ENCODE measurements at regions of chr4 and their contacts with region 1.

Region 1: DNA sequence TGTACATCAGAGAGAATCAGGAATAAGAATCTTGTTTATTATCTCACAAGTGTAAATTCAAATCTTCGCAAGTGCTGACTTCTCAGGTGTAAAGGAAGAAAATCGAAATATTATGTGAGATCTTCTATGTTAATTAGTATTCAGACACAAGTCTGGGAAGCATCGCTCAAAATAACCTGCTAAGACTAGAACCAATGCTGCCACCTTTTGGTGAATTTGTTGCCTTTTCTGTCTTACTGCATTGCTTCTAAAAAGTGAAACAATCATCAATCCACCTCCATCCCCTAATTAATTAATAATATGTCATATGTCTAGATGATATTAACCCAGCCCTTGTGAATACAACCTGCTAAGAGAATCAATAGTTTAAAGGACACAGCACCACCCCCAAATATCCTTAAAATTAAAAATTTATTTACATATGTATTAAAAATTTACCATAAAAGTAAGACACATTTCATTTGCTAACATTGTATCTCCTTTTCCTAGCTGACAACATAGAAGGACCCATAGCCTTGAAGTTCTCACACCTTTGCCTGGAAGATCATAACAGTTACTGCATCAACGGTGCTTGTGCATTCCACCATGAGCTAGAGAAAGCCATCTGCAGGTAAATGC is 3.5 kb downstream of the EPGN start:
- DNase-seq: peak in 4 of 14 experiments; percentile 36 to 69 (median 58)
- ATAC-seq: no peak
- H3K4me3 ChIP-seq: no peak overlapping the region
- H3K4me3 Mint-ChIP-seq: no peak overlapping the region
- H3K27ac ChIP-seq: no peak overlapping the region
- H3K27ac Mint-ChIP-seq: no peak overlapping the region
- H3K4me1 ChIP-seq: no peaks in the 10 kb centered on the region
- H3K4me1 Mint-ChIP-seq: peaks cover 23% of the 10 kb centered on the region
- H3K27me3 ChIP-seq: no peaks in the 10 kb centered on the region
- H3K27me3 Mint-ChIP-seq: no peaks in the 10 kb centered on the region
- CTCF ChIP-seq: peak; percentile 51

Region 2: GRCh38 chr4:74189331-74190043 is 122.3 kb before region 1 on chr4:
- CTCF ChIA-PET with region 1: no interaction called
- POLR2A ChIA-PET with region 1: no interaction called
- intact Hi-C with region 1: loop called in 1 of 2 experiments (anchors 1 kb)
- DNase-seq: peak in 4 of 14 experiments; percentile 6 to 69 (median 56)
- ATAC-seq: peak; percentile 34
- H3K4me3 ChIP-seq: no peak overlapping the region
- H3K4me3 Mint-ChIP-seq: no peak overlapping the region
- H3K27ac ChIP-seq: no peak overlapping the region
- H3K27ac Mint-ChIP-seq: no peak overlapping the region
- H3K4me1 ChIP-seq: no peaks in the 10 kb centered on the region
- H3K4me1 Mint-ChIP-seq: no peaks in the 10 kb centered on the region
- H3K27me3 ChIP-seq: no peaks in the 10 kb centered on the region
- H3K27me3 Mint-ChIP-seq: no peaks in the 10 kb centered on the region
- CTCF ChIP-seq: peak; percentile 70

Region 3: DNA sequence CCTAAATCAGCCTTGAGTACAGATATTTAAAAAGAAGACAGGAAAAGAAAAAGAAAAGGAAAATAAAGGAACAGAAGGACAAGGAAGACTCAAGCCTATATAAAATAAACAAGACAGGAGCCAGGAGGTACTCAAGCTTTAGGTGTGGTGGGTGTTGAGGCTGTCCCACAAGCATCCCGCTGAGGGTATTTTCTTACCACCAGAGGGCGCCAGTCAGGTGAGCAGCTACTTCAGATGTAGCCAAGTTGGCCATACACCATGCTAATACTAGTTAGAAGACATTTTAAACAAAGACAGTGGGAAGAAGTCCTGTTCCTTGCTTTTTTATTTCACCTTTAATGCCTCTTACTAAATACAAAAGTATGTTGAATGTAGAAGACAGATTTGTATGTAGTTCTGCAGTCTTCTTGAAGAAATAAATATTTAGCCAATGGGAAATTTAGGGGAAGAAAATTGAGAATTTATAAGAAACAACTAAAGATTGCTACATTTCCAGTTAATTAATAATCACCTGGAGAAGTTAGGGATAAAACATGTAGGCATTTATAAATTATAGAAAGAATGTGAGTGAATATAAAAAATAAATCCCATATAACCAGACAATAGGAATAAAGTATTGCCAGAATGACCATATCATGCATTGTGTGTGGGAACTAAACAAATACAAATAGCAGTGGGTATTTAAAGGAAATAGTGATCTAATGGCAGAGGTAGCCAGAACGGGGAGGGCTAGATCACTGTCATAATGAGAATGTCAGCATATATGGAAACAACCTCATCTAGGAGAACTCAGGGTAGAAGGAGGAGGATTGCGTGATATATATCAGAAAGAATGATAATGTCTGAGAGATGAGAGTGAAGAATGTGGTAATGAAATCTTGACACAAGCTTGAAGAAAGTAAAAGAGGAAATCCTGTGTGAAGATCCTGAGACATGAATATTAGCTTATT is 82.8 kb before region 1 on chr4:
- CTCF ChIA-PET with region 1: interaction called, 3 read pairs
- POLR2A ChIA-PET with region 1: interaction called, 3 read pairs
- intact Hi-C with region 1: loop called (anchors 1 to 2 kb)
- DNase-seq: peak; percentile 51 to 84 (median 66)
- ATAC-seq: peak; percentile 75
- H3K4me3 ChIP-seq: no peak overlapping the region
- H3K4me3 Mint-ChIP-seq: no peak overlapping the region
- H3K27ac ChIP-seq: no peak overlapping the region
- H3K27ac Mint-ChIP-seq: no peak overlapping the region
- H3K4me1 ChIP-seq: no peaks in the 10 kb centered on the region
- H3K4me1 Mint-ChIP-seq: no peaks in the 10 kb centered on the region
- H3K27me3 ChIP-seq: no peaks in the 10 kb centered on the region
- H3K27me3 Mint-ChIP-seq: no peaks in the 10 kb centered on the region
- CTCF ChIP-seq: peak; percentile 91

Measured in CD4-positive, alpha-beta T cell (primary cell).